Activated T-helper 2 cell treated with anti-CD3 and anti-CD28 coated beads, Interferon-gamma antibody, Interleukin-2, Interleukin-4, amounts not matched to agents 10 μg/mL and 5 μg/mL and 100 μg/mL, durations not matched to agents 14 hours and 24 hours and 36 hours (primary cell): ENCODE measurements at regions of chr9 and their contacts with region 1.

Region 1: GRCh38 chr9:134858051-134858841 is 22.4 kb upstream of the FCN2 start:
- DNase-seq: no peak
- H3K4me3 Mint-ChIP-seq: peak overlapping the region; percentile 54
- H3K27ac Mint-ChIP-seq: peak overlapping the region; percentile 95
- H3K4me1 Mint-ChIP-seq: peaks cover 6% of the 10 kb centered on the region
- H3K27me3 Mint-ChIP-seq: peaks cover 3% of the 10 kb centered on the region

Region 2: GRCh38 chr9:134407123-134407808 is 451.0 kb before region 1 on chr9:
- intact Hi-C with region 1: no loop called
- DNase-seq: peak; percentile 77
- H3K4me3 Mint-ChIP-seq: peak overlapping the region; percentile 55
- H3K27ac Mint-ChIP-seq: no peak overlapping the region
- H3K4me1 Mint-ChIP-seq: peaks cover 29% of the 10 kb centered on the region
- H3K27me3 Mint-ChIP-seq: peaks cover 4% of the 10 kb centered on the region

Region 3: DNA sequence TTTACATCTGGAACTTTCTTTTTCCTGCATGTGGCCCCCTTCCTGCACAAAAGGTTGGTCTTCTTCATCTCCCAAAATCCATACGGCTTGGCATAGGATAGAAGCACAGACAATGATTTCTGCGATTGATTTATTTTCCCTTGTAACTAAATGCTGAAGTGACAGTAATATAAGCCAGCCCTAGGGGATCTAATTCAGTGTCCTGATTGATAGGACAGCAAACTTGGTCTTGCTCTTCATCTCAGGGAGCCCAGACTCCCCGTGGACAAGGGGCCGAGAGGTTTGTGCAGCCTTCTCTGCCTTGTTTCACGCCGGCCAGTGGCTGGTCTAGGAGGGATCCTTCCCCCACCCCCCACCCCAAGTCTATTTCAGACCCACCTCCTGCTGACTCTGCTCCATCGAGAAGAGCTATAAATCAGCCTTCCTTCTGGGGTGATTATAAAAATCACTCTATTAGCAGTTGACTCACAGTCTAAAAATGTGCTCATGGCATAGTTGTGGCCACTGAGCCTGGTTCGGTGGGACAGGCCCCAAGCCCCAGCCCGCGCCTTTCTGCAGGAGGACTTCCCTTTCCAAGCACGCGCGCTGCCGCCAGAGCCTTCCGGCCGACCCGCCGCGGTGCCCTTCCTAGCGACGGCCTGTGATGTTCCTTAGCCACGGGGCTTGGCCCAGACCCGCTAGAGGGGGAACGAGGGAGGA is 306.4 kb before region 1 on chr9:
- intact Hi-C with region 1: no loop called
- DNase-seq: no peak
- H3K4me3 Mint-ChIP-seq: no peak overlapping the region
- H3K27ac Mint-ChIP-seq: no peak overlapping the region
- H3K4me1 Mint-ChIP-seq: no peaks in the 10 kb centered on the region
- H3K27me3 Mint-ChIP-seq: no peaks in the 10 kb centered on the region

Region 4: GRCh38 chr9:134698587-134699342 is 159.5 kb before region 1 on chr9:
- intact Hi-C with region 1: loop called (anchors 1 kb)
- DNase-seq: peak; percentile 47
- H3K4me3 Mint-ChIP-seq: no peak overlapping the region
- H3K27ac Mint-ChIP-seq: no peak overlapping the region
- H3K4me1 Mint-ChIP-seq: no peaks in the 10 kb centered on the region
- H3K27me3 Mint-ChIP-seq: no peaks in the 10 kb centered on the region

Region 5: DNA sequence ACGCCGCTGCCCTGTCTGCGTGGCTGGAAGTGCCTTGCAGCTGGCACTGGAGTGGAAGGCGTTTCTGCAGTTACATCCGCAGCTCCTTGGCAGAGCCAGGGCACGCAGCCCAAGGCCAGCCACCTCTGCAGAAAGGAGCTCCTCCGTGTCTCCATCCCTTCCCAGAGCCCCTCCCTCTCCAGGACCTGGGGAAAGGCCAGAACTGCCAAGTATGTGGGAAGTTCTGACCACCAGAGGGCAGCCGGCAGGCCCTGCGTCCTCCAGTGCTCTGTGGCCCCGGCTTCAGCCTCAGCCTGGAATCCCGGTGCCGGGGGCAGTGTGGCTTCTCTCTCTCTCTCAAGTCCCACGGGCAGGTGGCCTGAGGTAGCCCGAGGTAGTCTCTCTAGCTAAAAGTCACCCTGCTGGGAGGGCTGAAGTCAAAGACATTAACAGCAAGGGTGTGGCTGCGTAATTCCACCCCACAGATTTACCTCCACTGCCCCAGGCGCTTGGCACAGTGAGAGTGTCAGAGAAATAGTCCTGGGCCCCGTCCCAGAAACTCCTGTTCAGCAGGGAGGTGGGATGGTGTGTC is 79.3 kb before region 1 on chr9:
- intact Hi-C with region 1: loop called (anchors 10 kb)
- DNase-seq: no peak
- H3K4me3 Mint-ChIP-seq: no peak overlapping the region
- H3K27ac Mint-ChIP-seq: no peak overlapping the region
- H3K4me1 Mint-ChIP-seq: peaks cover 3% of the 10 kb centered on the region
- H3K27me3 Mint-ChIP-seq: no peaks in the 10 kb centered on the region